ENCODE measurements at regions of chr12 and their contacts with region 1.

Region 1: DNA sequence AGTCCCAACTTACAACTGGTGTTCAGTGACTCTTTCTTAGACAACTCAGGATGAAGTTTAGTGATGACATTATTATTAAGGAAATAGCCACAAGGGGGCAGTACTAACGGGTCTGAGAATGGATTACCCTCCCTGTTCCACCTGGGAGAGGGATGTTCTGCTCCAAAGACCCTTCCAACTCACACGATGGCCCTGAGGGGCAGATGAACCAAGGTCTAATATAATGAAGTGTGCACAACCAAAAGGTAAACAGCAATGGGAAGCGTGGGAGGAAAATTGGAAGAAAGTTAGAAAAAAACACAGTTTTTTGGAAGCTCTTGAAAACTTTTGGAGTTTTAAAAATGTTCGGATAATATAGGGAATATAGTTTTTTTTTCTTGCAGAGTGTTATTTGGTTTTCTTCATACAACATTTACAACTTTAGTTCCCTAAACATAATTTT is 24.0 kb downstream of the FGF6 start:
- DNase-seq: no peak
- H3K4me3 ChIP-seq: no peak overlapping the region
- H3K27ac ChIP-seq: no peak overlapping the region
- H3K4me1 ChIP-seq: no peaks in the 10 kb centered on the region
- H3K27me3 ChIP-seq: no peaks in the 10 kb centered on the region
- CTCF ChIP-seq: no peak

Region 2: GRCh38 chr12:4261655-4262054 is 160.0 kb before region 1 on chr12:
- intact Hi-C with region 1: no loop called
- DNase-seq: no peak
- H3K4me3 ChIP-seq: no peak overlapping the region
- H3K27ac ChIP-seq: no peak overlapping the region
- H3K4me1 ChIP-seq: no peaks in the 10 kb centered on the region
- H3K27me3 ChIP-seq: no peaks in the 10 kb centered on the region
- CTCF ChIP-seq: no peak

Region 3: DNA sequence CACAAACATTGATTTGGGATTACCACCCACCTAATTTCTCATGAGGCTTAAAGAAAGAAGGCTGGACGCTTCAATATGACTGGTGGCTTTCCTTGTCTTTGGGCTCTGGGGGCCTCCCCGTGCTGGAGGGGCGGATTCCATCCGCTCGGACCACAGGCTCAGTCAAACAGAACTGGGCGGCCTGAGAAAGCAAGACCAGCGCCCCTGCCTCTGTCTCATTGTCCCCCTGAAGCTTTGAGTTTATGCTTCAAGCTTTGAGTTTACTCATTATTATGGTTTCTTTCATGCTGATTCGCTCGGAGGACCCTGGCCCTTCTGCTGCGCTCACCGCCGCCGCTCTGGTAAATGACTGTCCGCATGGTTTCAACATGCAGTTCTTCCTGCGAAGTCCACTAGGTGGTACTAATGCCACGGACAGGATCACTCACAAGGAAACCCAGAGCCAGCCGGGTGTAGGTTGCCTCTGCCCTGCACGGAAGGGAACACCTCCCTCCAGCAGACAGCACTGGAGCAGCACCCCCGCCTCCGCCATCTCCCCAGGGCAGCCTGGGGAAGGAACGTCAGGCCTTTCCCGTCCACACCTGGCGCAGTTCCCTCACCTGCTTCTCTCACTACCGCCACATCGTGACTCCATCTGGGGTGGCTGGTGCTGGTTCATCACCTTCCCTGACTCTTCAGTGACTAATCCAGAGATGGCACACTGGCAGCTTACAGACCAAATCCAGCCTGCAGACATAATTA is 113.8 kb before region 1 on chr12:
- intact Hi-C with region 1: loop called (anchors 5 kb)
- DNase-seq: peak; percentile 87
- H3K4me3 ChIP-seq: no peak overlapping the region
- H3K27ac ChIP-seq: peak overlapping the region; percentile 38
- H3K4me1 ChIP-seq: peaks cover 7% of the 10 kb centered on the region
- H3K27me3 ChIP-seq: no peaks in the 10 kb centered on the region
- CTCF ChIP-seq: peak; percentile 45